ENCODE measurements at regions of chr19 and their contacts with region 1.

Region 1: GRCh38 chr19:36973021-36973843 is 57.1 kb downstream of the ZNF568 start:
- DNase-seq: peak; percentile 92
- ATAC-seq: peak; percentile 98
- H3K4me3 Mint-ChIP-seq: peak overlapping the region; percentile 81
- H3K27ac Mint-ChIP-seq: peak overlapping the region; percentile 92
- H3K4me1 Mint-ChIP-seq: peaks cover 6% of the 10 kb centered on the region
- H3K27me3 Mint-ChIP-seq: no peaks in the 10 kb centered on the region

Region 2: DNA sequence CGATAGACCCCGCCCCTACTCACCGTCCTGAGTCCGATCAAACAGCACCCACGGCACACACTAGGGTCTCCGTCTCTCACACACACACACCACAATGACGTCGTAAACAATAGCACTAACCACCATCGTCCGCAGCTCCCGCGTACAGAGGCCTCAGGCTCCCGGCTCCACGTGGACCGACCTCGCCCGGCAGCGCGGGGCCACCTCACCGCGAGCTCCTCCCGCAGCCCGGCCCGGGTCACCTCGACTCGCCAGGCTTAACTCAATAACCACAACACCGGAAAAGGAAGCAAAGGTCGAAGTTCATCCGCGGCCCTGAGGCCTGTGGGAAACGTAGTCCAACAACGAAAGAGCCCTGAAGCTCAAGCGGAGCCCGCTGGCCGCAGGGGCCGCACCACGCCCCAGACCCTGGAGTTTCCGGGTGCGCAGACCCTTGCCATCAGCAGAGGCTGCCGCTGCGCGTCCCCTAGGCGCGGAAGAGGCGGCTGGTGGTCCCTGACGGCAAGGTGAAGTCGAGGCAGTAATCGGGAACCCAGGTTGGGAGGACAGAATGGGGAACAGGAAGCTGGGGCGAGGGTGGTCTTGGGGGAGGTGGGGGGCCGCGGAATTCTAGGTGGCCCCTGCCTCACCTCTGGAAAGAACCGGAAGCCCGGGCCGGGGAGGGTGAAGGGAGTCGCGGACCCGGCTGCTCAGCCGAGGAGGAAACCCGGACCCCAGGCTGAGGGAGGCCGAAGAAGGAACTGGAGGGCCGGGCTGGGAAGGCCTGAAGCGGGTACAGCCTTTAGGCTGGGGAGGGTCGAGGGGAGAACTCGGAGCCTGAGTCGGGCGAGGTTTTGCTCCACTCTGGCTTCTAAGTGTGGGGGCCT is 400.0 kb before region 1 on chr19 and contains the start of gene ZNF529:
- CTCF ChIA-PET with region 1: no interaction called
- POLR2A ChIA-PET with region 1: no interaction called
- intact Hi-C with region 1: loop called in 1 of 2 experiments (anchors 1 kb)
- DNase-seq: peak; percentile 91
- ATAC-seq: peak; percentile 90
- H3K4me3 Mint-ChIP-seq: peak within 1 kb of the TSS; percentile 83
- H3K27ac Mint-ChIP-seq: peak within 1 kb of the TSS; percentile 93
- H3K4me1 Mint-ChIP-seq: peaks cover 27% of the 10 kb centered on the region
- H3K27me3 Mint-ChIP-seq: no peaks in the 10 kb centered on the region
- total RNA-seq, gene ZNF529: 12.5 to 19.2 TPM

Region 3: DNA sequence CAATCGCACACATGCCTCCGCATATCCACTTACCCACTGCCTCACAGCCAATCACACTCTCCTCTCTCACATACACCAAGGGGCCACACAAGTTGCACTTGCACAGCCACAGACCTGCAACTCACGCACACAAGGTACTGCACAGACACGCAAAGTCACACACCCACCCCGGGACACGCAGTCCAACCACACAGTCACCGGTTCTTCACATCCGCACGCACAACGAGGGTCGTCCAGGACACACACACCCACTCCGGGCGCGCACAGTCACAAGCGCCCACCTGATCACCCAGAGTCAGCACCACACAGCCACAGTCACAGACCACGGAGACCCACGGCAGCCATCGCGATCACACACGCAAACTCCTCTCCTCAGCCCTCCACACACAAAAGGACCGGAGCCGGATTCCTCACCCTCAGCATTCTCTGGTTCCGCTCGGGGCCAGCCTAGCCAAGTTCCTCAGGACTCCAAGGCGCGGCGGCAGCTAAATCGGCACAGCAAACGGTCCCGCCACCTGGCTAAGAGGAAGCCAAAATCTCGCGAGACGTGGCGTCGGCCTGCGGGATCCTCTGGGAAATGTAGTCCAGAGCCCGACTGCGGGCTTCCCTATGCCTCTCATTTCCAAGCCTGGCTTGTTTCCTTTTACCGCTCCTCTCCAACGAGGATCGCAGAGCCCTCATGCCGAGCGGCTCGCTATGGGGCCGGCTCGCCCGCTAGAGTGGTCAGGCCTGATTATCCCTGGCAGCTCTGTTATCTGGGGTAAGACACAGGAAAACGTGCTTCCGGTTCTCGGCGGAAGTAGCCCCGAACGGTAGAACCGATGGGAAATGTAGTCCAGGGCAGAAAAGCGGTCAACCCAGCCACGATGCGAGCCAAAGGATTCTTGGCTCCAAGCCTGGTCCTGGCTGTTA is 200.7 kb before region 1 on chr19 and contains the start of gene ZNF850:
- CTCF ChIA-PET with region 1: no interaction called
- POLR2A ChIA-PET with region 1: no interaction called
- intact Hi-C with region 1: loop called in 1 of 2 experiments (anchors 1 kb)
- DNase-seq: peak; percentile 97
- ATAC-seq: peak; percentile 92
- H3K4me3 Mint-ChIP-seq: peak within 1 kb of the TSS; percentile 99
- H3K27ac Mint-ChIP-seq: peak within 1 kb of the TSS; percentile 97
- H3K4me1 Mint-ChIP-seq: peaks cover 20% of the 10 kb centered on the region
- H3K27me3 Mint-ChIP-seq: no peaks in the 10 kb centered on the region
- total RNA-seq, gene ZNF850: 7.0 to 10.7 TPM

Region 4: GRCh38 chr19:37172368-37173366 is 199.4 kb after region 1 on chr19 and contains the start of gene ZNF585A:
- CTCF ChIA-PET with region 1: no interaction called
- POLR2A ChIA-PET with region 1: no interaction called
- intact Hi-C with region 1: loop called in 1 of 2 experiments (anchors 2 kb)
- DNase-seq: peak; percentile 92
- ATAC-seq: peak; percentile 100
- H3K4me3 Mint-ChIP-seq: no peak within 1 kb of the TSS
- H3K27ac Mint-ChIP-seq: no peak within 1 kb of the TSS
- H3K4me1 Mint-ChIP-seq: no peaks in the 10 kb centered on the region
- H3K27me3 Mint-ChIP-seq: no peaks in the 10 kb centered on the region
- total RNA-seq, gene ZNF585A: 8.7 to 9.8 TPM

Region 5: DNA sequence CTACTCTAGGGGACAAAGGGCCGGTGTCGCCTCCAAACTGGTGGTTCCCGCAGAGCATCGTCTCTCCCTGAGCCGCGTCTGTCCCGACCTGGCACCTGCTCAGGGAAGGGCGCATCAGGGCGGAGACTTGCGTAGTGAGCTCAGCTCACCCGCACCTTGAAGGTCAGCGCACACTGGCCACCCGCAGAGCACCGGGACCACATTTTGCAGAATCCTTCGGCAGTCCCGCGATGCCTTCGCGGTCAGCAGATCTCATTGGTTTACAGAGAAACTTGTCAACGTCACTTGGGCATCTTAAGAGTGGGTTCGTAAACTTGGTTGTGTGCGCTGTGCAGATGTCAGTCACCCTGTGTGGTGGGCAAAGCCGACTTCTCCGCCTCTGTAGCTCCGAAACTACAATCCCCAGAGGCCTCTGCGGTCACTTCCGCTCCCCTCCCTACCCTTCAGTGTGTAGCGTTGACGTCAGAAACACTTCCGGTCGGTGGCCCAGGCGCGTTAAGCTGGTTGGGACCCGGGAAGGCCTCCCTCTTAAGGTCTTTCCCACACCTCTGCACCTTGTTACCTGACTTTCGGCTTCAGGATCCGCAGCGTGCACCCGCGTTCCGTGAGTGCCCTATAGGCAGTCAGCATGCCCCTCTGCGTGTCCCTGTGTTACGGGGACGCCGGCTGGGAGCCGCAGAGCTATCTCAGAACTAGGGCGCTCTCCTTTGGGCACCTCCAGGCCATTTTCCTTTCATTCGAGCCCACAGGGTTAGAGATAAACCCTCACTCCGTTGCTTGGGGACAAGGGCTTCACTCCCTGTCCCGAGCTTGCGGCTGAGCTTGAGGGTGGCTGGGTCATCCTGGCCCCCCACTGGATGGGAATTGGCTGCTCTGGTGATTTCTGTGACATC is 361.2 kb after region 1 on chr19:
- CTCF ChIA-PET with region 1: no interaction called
- POLR2A ChIA-PET with region 1: no interaction called
- intact Hi-C with region 1: loop called in 1 of 2 experiments (anchors 1 kb)
- DNase-seq: peak; percentile 93
- ATAC-seq: peak; percentile 99
- H3K4me3 Mint-ChIP-seq: peak overlapping the region; percentile 79
- H3K27ac Mint-ChIP-seq: peak overlapping the region; percentile 70
- H3K4me1 Mint-ChIP-seq: peaks cover 34% of the 10 kb centered on the region
- H3K27me3 Mint-ChIP-seq: no peaks in the 10 kb centered on the region